AG04450 (cell line): ENCODE measurements at regions of chr5 and their contacts with region 1.

Region 1: GRCh38 chr5:142655339-142656267 is 30.3 kb downstream of the FGF1 start:
- DNase-seq: peak; percentile 72
- H3K4me3 ChIP-seq: no peak overlapping the region
- H3K27ac ChIP-seq: no peak overlapping the region
- H3K27me3 ChIP-seq: no peaks in the 10 kb centered on the region
- CTCF ChIP-seq: peak; percentile 99

Region 2: DNA sequence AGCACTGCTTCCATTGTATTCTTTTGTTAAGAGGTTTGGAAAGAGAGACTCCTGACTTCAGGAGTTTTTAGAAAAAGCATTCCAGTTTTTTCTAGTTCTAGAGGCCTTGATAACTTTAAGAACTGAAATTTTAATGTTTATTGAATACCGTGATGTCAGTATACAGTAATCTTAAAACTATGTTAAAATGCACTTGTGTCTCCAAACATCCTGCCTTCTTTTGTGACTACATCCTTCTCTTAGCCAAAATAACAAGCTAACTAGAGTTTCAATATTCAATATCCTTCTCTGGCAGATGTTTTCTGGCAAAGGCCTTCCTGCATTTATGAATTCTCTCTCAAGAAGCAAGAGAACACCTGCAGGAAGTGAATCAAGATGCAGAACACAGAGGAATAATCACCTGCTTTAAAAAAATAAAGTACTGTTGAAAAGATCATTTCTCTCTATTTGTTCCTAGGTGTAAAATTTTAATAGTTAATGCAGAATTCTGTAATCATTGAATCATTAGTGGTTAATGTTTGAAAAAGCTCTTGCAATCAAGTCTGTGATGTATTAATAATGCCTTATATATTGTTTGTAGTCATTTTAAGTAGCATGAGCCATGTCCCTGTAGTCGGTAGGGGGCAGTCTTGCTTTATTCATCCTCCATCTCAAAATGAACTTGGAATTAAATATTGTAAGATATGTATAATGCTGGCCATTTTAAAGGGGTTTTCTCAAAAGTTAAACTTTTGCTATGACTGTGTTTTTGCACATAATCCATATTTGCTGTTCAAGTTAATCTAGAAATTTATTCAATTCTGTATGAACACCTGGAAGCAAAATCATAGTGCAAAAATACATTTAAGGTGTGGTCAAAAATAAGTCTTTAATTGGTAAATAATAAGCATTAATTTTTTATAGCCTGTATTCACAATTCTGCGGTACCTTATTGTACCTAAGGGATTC is 503.9 kb before region 1 on chr5:
- CTCF ChIA-PET with region 1: interaction called, 10 read pairs
- POLR2A ChIA-PET with region 1: no interaction called
- DNase-seq: peak; percentile 74
- H3K4me3 ChIP-seq: no peak overlapping the region
- H3K27ac ChIP-seq: peak overlapping the region; percentile 47
- H3K27me3 ChIP-seq: no peaks in the 10 kb centered on the region
- CTCF ChIP-seq: peak; percentile 85

Region 3: DNA sequence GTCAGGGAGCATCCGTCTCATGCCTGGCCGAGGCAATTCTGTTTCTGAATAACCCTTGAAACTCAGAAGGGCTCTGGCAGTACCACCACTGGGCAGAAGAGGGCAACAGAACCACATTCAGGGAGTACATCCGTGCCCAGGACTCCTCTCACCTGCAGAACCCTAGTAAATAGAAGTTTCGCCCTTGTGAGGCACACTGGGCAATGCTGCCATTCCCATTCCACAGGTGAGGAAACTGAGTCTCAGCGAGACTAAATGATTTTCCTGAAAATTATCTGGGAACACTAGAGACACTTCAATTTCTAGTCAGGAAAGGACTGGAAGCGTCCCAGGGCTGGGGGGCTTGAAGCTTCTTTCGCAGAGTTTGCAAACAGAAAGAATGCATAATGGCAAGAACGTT is 44.4 kb before region 1 on chr5:
- CTCF ChIA-PET with region 1: interaction called, 39 read pairs
- POLR2A ChIA-PET with region 1: no interaction called
- DNase-seq: peak; percentile 30
- H3K4me3 ChIP-seq: no peak overlapping the region
- H3K27ac ChIP-seq: no peak overlapping the region
- H3K27me3 ChIP-seq: no peaks in the 10 kb centered on the region
- CTCF ChIP-seq: peak; percentile 92

Region 4: DNA sequence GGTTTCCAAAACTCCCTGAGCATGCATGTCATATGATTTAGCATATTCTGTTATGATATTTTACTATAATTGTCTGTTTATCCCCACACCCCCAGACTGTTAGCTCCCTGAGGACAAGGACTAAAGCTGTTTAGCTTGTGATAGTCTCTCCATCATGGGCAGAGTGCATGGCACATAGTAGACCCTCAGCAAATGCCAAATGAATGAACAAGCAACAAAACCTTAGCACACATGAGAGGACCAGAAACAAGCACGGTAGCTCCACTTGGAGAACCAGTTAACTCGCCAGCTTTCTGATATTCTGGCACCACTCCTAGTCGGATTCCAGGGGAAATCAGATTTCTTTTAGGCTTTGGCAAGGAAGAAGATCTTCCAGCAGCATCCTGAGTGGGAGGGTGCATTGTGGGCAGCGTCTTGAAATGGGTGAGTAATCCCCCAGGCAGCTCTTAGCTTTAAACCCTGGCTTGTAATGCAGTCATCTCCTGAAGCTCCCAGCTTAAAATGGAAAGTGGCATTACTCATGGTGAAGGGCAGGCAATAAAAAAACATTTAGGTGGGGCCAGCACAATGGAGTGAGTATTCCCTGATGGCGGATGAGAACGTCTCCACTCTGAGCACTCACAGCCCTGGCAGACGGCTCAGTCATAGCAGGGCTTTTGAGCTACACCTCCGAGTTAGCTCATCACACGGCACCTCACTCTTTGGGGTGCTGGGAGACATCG is 10.8 kb before region 1 on chr5:
- CTCF ChIA-PET with region 1: interaction called, 95 read pairs
- POLR2A ChIA-PET with region 1: interaction called, 9 read pairs
- DNase-seq: peak; percentile 96
- H3K4me3 ChIP-seq: peak overlapping the region; percentile 49
- H3K27ac ChIP-seq: peak overlapping the region; percentile 97
- H3K27me3 ChIP-seq: no peaks in the 10 kb centered on the region
- CTCF ChIP-seq: no peak

Region 5: DNA sequence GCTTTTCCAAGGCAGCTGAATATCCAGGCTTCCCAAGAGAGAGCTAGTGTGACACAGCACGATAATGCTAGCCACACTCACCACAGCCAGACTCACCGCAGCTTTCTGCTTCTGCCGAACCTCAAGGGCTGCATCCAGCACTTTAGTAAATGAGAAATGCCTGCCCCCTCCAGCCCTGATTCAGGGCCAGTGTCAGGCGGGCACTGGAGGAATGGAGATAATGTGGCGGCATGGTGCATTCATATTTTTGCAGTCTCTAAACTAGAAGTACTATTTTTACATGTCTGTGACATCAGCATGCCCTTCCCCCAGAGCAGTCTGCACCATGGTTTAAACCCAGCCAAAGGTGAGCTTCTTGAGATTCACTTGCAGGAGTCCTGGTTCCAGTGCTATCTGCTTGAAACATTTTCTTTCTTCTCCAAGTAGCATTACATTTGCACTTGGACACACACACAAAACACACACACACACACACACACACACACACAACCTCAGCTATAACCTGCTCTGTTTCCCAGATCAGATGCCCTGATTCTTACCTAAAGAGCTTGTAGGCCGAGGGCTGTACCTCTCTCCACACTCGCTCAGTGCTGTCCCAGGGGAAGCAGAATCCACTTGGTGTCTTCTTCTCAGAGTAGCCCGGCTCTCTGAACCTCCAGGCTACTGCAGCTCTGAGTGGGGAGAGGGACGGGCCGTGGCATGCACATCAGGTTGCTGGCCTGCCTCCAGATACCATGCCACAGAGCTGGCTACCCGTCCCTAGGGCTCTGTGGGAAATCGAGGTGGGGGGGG is 30.0 kb after region 1 on chr5 and contains the start of gene FGF1:
- CTCF ChIA-PET with region 1: interaction called, 36 read pairs
- POLR2A ChIA-PET with region 1: no interaction called
- DNase-seq: no peak
- H3K4me3 ChIP-seq: no peak within 1 kb of the TSS
- H3K27ac ChIP-seq: no peak within 1 kb of the TSS
- H3K27me3 ChIP-seq: no peaks in the 10 kb centered on the region
- CTCF ChIP-seq: no peak
- polyA plus RNA-seq, gene FGF1: 5.9 and 6.3 TPM in 2 replicates

Region 6: GRCh38 chr5:142699184-142699720 is 43.6 kb after region 1 on chr5:
- CTCF ChIA-PET with region 1: interaction called, 244 read pairs
- POLR2A ChIA-PET with region 1: interaction called, 9 read pairs
- DNase-seq: peak; percentile 76
- H3K4me3 ChIP-seq: no peak overlapping the region
- H3K27ac ChIP-seq: no peak overlapping the region
- H3K27me3 ChIP-seq: no peaks in the 10 kb centered on the region
- CTCF ChIP-seq: peak; percentile 97

Region 7: DNA sequence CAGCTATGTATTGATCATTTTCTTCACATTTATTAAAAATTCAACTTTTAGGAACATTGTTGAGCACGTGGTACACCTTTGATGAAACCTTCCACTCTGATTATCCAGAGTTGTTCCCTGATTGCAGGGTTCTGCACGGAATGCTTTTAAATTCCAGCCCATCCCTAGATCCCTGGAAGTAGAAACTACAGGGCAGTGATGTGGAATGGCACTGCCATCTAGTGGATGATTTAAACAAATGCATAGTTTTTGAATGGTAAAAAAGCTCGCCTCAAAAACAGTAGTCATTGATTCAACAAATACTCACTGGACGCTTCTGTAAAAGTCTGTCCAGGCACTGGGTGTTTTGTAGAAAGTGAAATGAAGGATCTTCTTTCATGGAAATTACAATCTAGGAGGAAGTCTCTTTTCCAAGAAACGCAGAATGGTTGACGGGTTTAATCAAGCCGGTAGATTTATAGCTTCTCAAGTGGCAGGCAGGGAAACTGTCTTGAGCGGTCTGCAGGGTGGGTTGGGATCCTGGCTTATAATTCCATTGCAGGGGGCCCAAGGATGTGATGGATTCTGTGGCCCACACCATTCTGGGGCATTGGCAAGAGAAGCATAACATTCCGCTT is 233.0 kb after region 1 on chr5:
- CTCF ChIA-PET with region 1: interaction called, 19 read pairs
- POLR2A ChIA-PET with region 1: no interaction called
- DNase-seq: no peak
- H3K4me3 ChIP-seq: no peak overlapping the region
- H3K27ac ChIP-seq: no peak overlapping the region
- H3K27me3 ChIP-seq: no peaks in the 10 kb centered on the region
- CTCF ChIP-seq: peak; percentile 75